ENCODE measurements at regions of chr19 and their contacts with region 1.

Region 1: GRCh38 chr19:4732680-4733114 is 9.1 kb upstream of the DPP9 start:
- DNase-seq: peak in 2 of 6 donors; percentile 43 to 47
- ATAC-seq: peak; percentile 79 to 97 (median 95)
- H3K4me3 ChIP-seq: no peak overlapping the region
- H3K27ac ChIP-seq: no peak overlapping the region
- H3K4me1 ChIP-seq: no peaks in the 10 kb centered on the region
- H3K27me3 ChIP-seq: no peaks in the 10 kb centered on the region
- CTCF ChIP-seq: peak; percentile 25 to 55 (median 47)

Region 2: GRCh38 chr19:4576016-4576933 is 156.4 kb before region 1 on chr19:
- intact Hi-C with region 1: no loop called
- DNase-seq: peak in 5 of 6 donors; percentile 37 to 87 (median 69)
- ATAC-seq: peak; percentile 46 to 79 (median 71)
- H3K4me3 ChIP-seq: no peak overlapping the region
- H3K27ac ChIP-seq: peak overlapping the region in 1 of 4 donors; percentile 46
- H3K4me1 ChIP-seq: no peaks in the 10 kb centered on the region
- H3K27me3 ChIP-seq: peaks cover 0 to 10% (median 0%) of the 10 kb centered on the region in 4 donors
- CTCF ChIP-seq: peak; percentile 31 to 51 (median 39)

Region 3: DNA sequence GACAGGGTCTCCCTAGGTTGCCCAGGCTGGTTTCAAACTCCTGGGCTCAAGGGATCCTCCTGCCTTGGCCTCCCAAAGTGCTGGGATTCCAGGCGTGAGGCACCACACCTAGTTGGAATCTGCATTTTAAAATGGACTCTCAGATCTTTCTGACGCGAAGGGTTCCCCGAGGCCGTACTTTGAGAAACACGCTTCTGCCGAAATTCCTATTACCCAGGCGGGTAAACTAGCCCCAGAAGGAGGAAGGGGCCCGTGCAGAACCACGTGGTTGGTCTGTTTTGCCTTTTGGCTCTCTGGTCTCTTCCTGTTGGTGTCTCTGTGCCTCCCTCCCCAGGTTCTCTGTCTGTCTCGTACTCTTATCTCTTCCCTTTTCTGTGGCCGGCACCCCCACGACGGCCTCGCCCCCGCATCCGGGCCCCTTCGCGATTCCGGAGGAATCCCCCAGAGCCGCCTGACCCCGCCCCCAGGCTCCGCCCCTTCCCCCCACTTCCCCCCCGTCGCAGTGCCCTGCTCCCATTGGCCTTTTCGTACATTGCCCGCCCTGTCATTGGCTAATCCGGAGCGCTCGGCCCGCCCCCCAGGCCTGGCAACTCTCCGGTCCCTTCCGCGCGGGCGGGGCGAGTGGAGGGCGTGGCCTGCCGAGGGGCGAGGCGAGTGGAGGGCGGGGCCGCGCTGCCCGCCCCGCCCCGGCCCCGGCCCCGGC is 93.7 kb before region 1 on chr19 and contains the start of gene TNFAIP8L1:
- intact Hi-C with region 1: no loop called
- DNase-seq: peak; percentile 93 to 99 (median 97)
- ATAC-seq: peak; percentile 94 to 97 (median 95)
- H3K4me3 ChIP-seq: peak within 1 kb of the TSS; percentile 36 to 72 (median 56)
- H3K27ac ChIP-seq: peak within 1 kb of the TSS in 2 of 4 donors; percentile 43 to 53
- H3K4me1 ChIP-seq: peaks cover 0 to 6% (median 0%) of the 10 kb centered on the region in 3 donors
- H3K27me3 ChIP-seq: no peaks in the 10 kb centered on the region
- CTCF ChIP-seq: no peak
- total RNA-seq, gene TNFAIP8L1: 1.2 to 3.3 (median 1.6) TPM

Region 4: GRCh38 chr19:4660181-4660791 is 72.4 kb before region 1 on chr19:
- intact Hi-C with region 1: no loop called
- DNase-seq: no peak
- ATAC-seq: peak in 2 of 4 donors; percentile 35 to 46
- H3K4me3 ChIP-seq: no peak overlapping the region
- H3K27ac ChIP-seq: no peak overlapping the region
- H3K4me1 ChIP-seq: no peaks in the 10 kb centered on the region
- H3K27me3 ChIP-seq: no peaks in the 10 kb centered on the region
- CTCF ChIP-seq: no peak

Region 5: DNA sequence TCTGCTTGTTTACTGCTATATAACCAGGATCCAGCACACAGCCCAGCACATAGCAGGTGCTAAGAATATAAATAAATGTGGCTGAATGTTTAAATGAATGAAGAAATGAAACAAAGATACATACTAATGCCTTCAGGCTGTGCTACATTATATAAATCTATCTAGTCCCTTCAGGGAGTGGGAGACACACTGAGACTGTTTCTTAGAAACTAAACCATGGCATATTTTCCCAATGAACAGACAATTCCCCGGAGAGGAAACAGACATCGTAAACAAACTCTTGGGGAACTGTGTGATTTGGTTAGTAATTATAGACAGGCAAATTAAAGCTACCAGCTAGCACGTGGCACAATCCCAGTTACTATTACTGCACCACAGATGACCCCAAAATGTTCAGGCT is 49.1 kb after region 1 on chr19:
- intact Hi-C with region 1: loop called (anchors 5 to 10 kb)
- DNase-seq: no peak
- ATAC-seq: no peak
- H3K4me3 ChIP-seq: no peak overlapping the region
- H3K27ac ChIP-seq: no peak overlapping the region
- H3K4me1 ChIP-seq: no peaks in the 10 kb centered on the region
- H3K27me3 ChIP-seq: no peaks in the 10 kb centered on the region
- CTCF ChIP-seq: no peak

Region 6: DNA sequence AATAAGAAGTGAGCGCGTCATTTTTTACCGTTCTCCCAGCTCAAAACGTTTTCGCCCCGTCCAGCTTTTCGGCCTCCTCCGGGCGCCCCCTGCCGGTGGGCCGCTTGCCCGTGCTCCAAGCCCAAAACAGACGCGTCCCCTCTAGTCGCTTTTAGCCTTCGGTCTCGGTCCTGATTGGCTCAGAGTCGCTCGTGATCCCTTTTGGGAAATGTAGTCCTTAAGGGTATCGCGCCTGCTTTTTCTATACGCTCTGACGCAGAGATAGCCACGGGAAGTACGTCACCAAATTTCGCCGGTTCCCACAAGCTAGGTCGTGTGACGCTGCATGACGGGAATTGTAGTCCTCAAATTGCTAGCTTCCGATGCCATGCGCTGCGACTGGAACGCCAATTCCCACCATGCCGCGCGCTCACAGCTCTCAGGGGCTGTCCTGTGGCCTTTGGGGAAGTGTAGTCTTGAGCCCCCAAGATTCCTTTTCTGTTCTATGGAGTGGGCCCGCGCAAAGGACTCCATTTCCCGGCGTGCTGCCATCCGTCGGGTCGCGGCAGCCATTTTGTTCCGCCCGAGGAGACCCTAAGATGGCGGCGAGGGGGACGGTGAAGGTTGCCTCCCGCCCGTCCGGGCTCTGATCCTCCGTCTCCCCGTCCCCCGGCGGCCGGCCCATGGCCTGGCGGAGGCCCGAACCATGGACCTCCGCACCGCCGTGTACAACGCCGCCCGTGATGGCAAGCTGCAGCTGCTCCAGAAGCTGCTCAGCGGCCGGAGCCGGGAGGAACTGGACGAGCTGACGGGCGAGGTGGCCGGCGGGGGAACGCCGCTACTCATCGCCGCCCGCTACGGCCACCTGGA is 58.7 kb after region 1 on chr19 and contains the start of gene FEM1A:
- intact Hi-C with region 1: loop called (anchors 5 to 10 kb)
- DNase-seq: peak; percentile 97 to 100 (median 99)
- ATAC-seq: peak; percentile 95 to 99 (median 97)
- H3K4me3 ChIP-seq: peak within 1 kb of the TSS; percentile 69 to 94 (median 86)
- H3K27ac ChIP-seq: peak within 1 kb of the TSS; percentile 80 to 85 (median 82)
- H3K4me1 ChIP-seq: peaks cover 16 to 29% (median 21%) of the 10 kb centered on the region in 3 donors
- H3K27me3 ChIP-seq: no peaks in the 10 kb centered on the region
- CTCF ChIP-seq: peak; percentile 96 to 99 (median 98)
- total RNA-seq, gene FEM1A: 5.4 to 9.2 (median 6.5) TPM

Measured in pancreas (tissue), 10 donors.